ENCODE measurements at regions of chr14 and their contacts with region 1.

Region 1: GRCh38 chr14:24141097-24141880 is at the start of gene EMC9:
- DNase-seq: peak; percentile 100
- H3K4me3 ChIP-seq: peak within 1 kb of the TSS; percentile 54 to 88
- H3K27ac ChIP-seq: peak within 1 kb of the TSS; percentile 91 to 95
- H3K4me1 ChIP-seq: peaks cover 13% of the 10 kb centered on the region
- H3K27me3 ChIP-seq: no peaks in the 10 kb centered on the region
- CTCF ChIP-seq: peak; percentile 33 to 95 (median 63)
- POLR2A ChIP-seq: peak; percentile 94
- total RNA-seq, gene EMC9: 13.1 to 13.6 TPM

Region 2: DNA sequence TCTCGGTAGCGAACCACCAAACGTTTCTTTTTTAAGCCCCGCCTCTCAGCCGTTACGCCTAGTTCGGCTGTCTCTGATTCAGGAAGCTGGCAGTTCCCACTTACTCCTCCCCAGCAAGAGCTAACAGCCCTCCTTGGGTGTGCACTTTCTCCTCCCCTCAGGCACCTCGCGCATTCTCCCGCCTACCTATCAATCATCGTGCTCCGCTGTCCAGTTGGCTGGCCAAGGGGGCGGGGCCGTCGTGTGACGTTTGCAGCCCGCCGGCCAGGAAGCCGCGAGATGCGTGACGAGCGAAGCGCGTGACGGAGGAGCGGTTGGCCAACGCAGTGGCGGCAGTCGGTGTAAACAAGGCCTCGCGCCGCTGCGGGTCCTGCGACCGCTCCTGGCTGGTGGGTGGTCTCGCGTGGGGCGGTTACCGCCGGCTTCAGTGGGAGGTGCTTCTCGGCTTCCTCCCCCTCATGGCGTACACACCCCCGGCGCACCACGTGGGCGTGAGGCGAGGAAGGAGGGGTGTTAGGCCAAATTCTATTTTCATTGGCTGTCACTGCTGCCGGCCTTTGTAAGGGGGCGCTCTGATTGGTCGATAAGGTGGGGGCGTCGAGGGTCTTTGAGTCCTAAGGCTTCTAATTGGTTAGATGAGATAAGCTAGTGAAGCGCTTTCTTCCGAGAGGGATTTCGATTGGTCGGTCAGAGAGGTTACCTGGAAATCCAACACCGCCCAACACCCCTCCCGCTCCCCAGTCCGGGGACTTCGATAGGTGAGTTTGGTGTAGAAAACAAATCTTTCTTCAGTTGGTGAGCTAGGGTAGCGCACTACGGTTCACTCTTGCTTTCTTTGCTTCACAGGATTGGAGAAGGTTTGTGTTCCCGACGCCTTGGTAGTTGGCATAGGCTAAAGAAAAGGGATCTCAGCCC is 26.5 kb before region 1 on chr14 and contains the starts of genes DCAF11 and NRL:
- intact Hi-C with region 1: loop called (anchors 2 kb)
- DNase-seq: peak; percentile 99
- H3K4me3 ChIP-seq: peak within 1 kb of the TSS; percentile 62 to 69
- H3K27ac ChIP-seq: peak within 1 kb of the TSS; percentile 99
- H3K4me1 ChIP-seq: peaks cover 4% of the 10 kb centered on the region
- H3K27me3 ChIP-seq: no peaks in the 10 kb centered on the region
- CTCF ChIP-seq: peak in 1 of 4 experiments; percentile 2
- POLR2A ChIP-seq: peak; percentile 84
- total RNA-seq, gene DCAF11: 111 to 115 TPM
- total RNA-seq, gene NRL: 4.3 to 4.7 TPM

Measured in prostate gland (tissue), 2 donors.